Stomach (tissue), 19 donors: ENCODE measurements at regions of chr6 and their contacts with region 1.

Region 1: DNA sequence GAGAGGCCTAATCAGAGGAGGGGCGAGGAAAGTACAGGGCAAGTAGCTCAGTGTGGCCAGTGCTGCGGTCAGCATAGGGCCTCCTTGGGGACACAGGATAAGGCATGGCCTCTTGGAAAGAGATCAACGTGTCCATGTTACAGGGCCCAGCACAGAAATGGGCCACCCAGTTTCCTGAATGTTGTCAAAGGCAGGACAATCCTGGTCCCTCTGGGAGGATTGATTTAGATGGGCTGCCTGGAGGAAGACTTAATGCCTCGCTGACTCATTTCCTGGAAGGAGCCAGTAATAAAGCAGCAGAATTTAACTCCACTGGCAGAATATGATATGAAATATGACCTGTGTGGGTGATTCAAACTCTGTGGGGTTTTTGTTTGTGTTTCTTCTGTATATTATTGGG is 16.6 kb downstream of the DDO start:
- DNase-seq: no peak
- H3K4me3 ChIP-seq: no peak overlapping the region
- H3K27ac ChIP-seq: no peak overlapping the region
- H3K4me1 ChIP-seq: peaks cover 0 to 13% (median 7%) of the 10 kb centered on the region in 4 donors
- H3K27me3 ChIP-seq: no peaks in the 10 kb centered on the region
- CTCF ChIP-seq: no peak
- EP300 ChIP-seq: no peak
- POLR2A ChIP-seq: no peak

Region 2: DNA sequence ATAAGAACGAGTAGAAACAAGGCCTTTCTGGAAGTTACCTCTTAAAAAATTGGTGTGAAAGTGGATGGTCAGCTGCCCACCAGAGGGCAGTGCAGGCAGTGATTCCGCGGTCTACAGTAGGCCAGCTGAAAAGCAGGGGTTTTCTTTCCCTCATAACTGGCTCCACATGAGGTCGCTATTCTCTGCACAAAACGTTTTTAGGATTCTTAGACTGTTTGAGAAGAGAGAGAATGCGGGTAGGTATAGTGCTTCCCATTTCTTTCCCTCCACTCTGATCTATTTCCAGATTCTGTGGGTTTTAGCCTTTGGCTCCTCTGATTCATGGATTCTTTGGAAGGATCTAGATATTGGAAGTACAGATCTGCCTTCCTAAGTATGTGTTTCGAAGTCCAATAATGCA is 693.5 kb before region 1 on chr6:
- intact Hi-C with region 1: loop called (anchors 10 kb)
- DNase-seq: peak; percentile 80 to 96
- H3K4me3 ChIP-seq: no peak overlapping the region
- H3K27ac ChIP-seq: no peak overlapping the region
- H3K4me1 ChIP-seq: peaks cover 0 to 44% (median 12%) of the 10 kb centered on the region in 4 donors
- H3K27me3 ChIP-seq: no peaks in the 10 kb centered on the region
- CTCF ChIP-seq: peak in 6 of 7 experiments; percentile 30 to 99 (median 90)
- EP300 ChIP-seq: no peak
- POLR2A ChIP-seq: no peak

Region 3: GRCh38 chr6:110053395-110054240 is 345.2 kb before region 1 on chr6:
- intact Hi-C with region 1: loop called (anchors 10 kb)
- DNase-seq: peak in 1 of 2 donors; percentile 83
- H3K4me3 ChIP-seq: no peak overlapping the region
- H3K27ac ChIP-seq: no peak overlapping the region
- H3K4me1 ChIP-seq: peaks cover 0 to 9% (median 0%) of the 10 kb centered on the region in 4 donors
- H3K27me3 ChIP-seq: peaks cover 0 to 5% (median 0%) of the 10 kb centered on the region in 3 donors
- CTCF ChIP-seq: peak in 5 of 7 experiments; percentile 30 to 61 (median 45)
- EP300 ChIP-seq: no peak
- POLR2A ChIP-seq: no peak

Region 4: DNA sequence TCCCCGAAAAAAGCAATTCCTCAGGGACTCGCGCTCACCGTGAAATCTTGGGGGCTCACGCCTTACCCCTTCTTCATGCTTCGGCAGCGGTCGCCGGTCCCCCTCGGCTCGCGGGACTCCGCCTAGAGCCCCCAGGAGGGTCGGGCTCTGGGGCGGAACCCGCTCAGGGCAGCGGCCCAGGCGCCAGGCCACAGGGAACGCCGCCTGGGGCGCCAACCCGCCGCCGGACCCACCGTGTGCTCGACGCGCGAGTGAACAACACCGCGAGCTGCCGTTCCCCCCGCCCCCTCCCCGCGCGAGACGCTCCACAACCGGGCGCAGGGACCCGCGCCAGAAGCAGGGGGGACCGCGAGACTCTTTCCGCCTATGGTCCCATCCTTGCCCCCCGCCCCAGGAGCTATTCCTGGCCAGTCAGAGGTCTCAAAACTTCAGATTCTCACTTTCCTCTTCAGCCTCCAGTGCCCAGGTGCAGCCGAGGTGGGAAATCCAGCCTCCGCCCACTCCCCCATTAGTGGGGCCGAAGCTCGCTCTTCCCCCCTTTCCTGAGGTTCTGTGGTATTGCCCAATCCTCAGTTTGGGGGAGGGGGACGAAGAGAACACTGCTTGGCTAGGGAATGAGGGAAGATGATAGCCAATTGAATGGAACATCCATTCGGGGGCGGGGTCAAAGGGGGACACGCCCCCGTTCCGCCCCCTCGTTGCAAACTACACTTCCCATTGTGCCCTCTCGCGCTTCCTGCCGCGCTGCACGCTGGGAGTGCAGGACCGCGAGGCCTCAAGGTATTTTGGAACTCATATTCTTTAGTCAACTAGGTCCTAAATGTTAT is 219.2 kb before region 1 on chr6 and contains the start of gene WASF1:
- intact Hi-C with region 1: loop called (anchors 10 kb)
- DNase-seq: peak; percentile 93 to 98
- H3K4me3 ChIP-seq: peak within 1 kb of the TSS; percentile 66 to 97 (median 84)
- H3K27ac ChIP-seq: peak within 1 kb of the TSS; percentile 76 to 89 (median 83)
- H3K4me1 ChIP-seq: peaks cover 32 to 60% (median 43%) of the 10 kb centered on the region in 4 donors
- H3K27me3 ChIP-seq: no peaks in the 10 kb centered on the region
- CTCF ChIP-seq: no peak
- EP300 ChIP-seq: no peak
- POLR2A ChIP-seq: no peak
- total RNA-seq, gene WASF1: 0.58 to 17.0 (median 8.8) TPM

Region 5: DNA sequence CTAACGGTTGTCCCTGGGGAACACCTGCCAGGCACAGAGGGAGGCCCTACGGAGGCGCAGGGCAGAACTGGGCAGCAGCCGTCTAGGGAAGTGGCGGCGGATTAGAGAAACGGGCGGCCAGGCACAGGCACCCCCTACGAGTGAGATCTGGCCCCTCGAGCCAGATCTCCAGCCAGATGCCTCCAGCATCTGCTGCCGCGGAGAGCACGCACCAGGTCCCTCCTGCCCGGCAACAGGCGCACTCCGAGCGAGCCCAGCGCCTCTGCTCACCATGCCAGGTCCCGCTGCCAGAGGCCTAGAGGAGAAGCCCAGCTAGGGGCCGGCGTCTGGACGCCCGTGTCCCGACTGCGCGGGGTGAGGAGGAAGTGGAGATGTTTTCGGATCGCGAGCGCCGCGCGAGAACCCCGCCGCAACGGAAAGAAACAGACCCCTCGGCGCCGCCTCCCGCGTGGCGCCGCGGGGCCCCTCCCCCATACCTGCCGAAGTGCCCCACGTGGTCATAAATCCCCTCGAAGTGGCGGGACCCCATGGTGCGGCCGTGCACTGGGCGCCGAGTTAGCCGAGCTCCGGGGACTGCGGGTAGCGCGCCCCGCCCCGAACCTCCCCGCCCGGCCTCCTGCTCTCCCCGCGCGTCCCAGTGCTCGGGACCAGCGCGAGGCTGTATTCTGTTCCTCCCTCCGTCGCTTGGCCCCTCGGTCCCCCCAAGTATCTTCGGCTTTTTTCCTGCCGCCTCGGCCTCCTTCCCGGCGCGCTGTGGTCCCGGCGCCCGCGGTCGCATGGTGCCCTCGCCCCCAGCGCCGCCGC is 77.5 kb after region 1 on chr6 and contains the start of gene SLC22A16:
- intact Hi-C with region 1: no loop called
- DNase-seq: peak in 1 of 2 donors; percentile 54
- H3K4me3 ChIP-seq: peak within 1 kb of the TSS; percentile 38 to 51 (median 45)
- H3K27ac ChIP-seq: peak within 1 kb of the TSS in 1 of 5 donors; percentile 40
- H3K4me1 ChIP-seq: peaks cover 0 to 19% (median 13%) of the 10 kb centered on the region in 4 donors
- H3K27me3 ChIP-seq: peaks cover 0 to 34% (median 14%) of the 10 kb centered on the region in 3 donors
- CTCF ChIP-seq: no peak
- EP300 ChIP-seq: no peak
- POLR2A ChIP-seq: no peak
- total RNA-seq, gene SLC22A16: 0.92 TPM in 1 of 5 donors, not detected in the others